Naive thymus-derived CD4-positive, alpha-beta T cell (primary cell): ENCODE measurements at regions of chr4 and their contacts with region 1.

Region 1: GRCh38 chr4:70505151-70505748 is 13.1 kb upstream of the AMTN start:
- DNase-seq: peak in 7 of 9 donors; percentile 19 to 49 (median 31)
- ATAC-seq: peak; percentile 73
- H3K4me3 ChIP-seq: no peak overlapping the region
- H3K4me3 Mint-ChIP-seq: no peak overlapping the region
- H3K27ac ChIP-seq: no peak overlapping the region
- H3K27ac Mint-ChIP-seq: no peak overlapping the region
- H3K4me1 ChIP-seq: no peaks in the 10 kb centered on the region
- H3K4me1 Mint-ChIP-seq: no peaks in the 10 kb centered on the region
- H3K27me3 ChIP-seq: no peaks in the 10 kb centered on the region
- H3K27me3 Mint-ChIP-seq: no peaks in the 10 kb centered on the region

Region 2: GRCh38 chr4:69322055-69322454 is 1183.2 kb before region 1 on chr4:
- CTCF ChIA-PET with region 1: no interaction called
- POLR2A ChIA-PET with region 1: no interaction called
- intact Hi-C with region 1: loop called in 1 of 2 experiments (anchors 5 kb)
- DNase-seq: no peak
- ATAC-seq: peak; percentile 66
- H3K4me3 ChIP-seq: no peak overlapping the region
- H3K4me3 Mint-ChIP-seq: no peak overlapping the region
- H3K27ac ChIP-seq: no peak overlapping the region
- H3K27ac Mint-ChIP-seq: no peak overlapping the region
- H3K4me1 ChIP-seq: no peaks in the 10 kb centered on the region
- H3K4me1 Mint-ChIP-seq: no peaks in the 10 kb centered on the region
- H3K27me3 ChIP-seq: no peaks in the 10 kb centered on the region
- H3K27me3 Mint-ChIP-seq: peaks cover 0 to 3% (median 0%) of the 10 kb centered on the region in 5 donors

Region 3: GRCh38 chr4:70515367-70516245 is 10.4 kb after region 1 on chr4:
- CTCF ChIA-PET with region 1: no interaction called
- POLR2A ChIA-PET with region 1: no interaction called
- intact Hi-C with region 1: no loop called
- DNase-seq: no peak
- ATAC-seq: no peak
- H3K4me3 ChIP-seq: no peak overlapping the region
- H3K4me3 Mint-ChIP-seq: no peak overlapping the region
- H3K27ac ChIP-seq: no peak overlapping the region
- H3K27ac Mint-ChIP-seq: no peak overlapping the region
- H3K4me1 ChIP-seq: no peaks in the 10 kb centered on the region
- H3K4me1 Mint-ChIP-seq: peaks cover 0 to 1% (median 0%) of the 10 kb centered on the region in 7 donors
- H3K27me3 ChIP-seq: no peaks in the 10 kb centered on the region
- H3K27me3 Mint-ChIP-seq: peaks cover 0 to 23% (median 17%) of the 10 kb centered on the region in 5 donors

Region 4: DNA sequence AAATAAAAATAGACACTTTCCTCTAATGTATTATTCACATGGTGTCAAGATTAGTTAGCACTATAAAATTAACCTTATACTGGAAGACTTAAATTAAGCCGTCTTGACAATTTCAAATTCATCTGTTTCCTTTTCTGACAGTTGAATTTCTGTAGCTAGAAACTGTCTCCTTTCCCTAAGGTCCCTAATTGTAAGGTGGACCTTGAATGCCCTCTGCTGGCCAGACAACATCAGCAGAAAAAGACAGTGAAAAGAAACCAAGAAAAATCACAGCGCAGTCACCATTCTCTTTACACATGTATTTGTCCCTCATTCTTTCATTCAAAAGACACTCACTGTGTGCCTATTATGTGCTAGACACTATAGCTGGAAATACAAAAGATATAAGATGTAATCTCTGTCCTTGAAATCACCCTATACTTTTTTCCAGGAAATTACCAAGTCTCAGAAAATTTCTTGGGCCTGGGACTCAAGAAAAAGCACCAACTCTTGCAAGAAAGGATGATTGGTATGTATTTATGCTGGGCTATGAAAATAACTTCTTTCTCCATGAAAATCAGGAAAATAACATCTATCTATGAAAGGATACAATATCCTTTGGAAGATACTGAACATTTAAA is 54.1 kb after region 1 on chr4:
- CTCF ChIA-PET with region 1: no interaction called
- POLR2A ChIA-PET with region 1: no interaction called
- intact Hi-C with region 1: loop called in 1 of 2 experiments (anchors 2 kb)
- DNase-seq: peak in 5 of 9 donors; percentile 19 to 33 (median 31)
- ATAC-seq: peak; percentile 58
- H3K4me3 ChIP-seq: no peak overlapping the region
- H3K4me3 Mint-ChIP-seq: peak overlapping the region in 4 of 10 donors; percentile 16 to 52 (median 36)
- H3K27ac ChIP-seq: no peak overlapping the region
- H3K27ac Mint-ChIP-seq: no peak overlapping the region
- H3K4me1 ChIP-seq: no peaks in the 10 kb centered on the region
- H3K4me1 Mint-ChIP-seq: peaks cover 0 to 15% (median 6%) of the 10 kb centered on the region in 7 donors
- H3K27me3 ChIP-seq: no peaks in the 10 kb centered on the region
- H3K27me3 Mint-ChIP-seq: no peaks in the 10 kb centered on the region